ENCODE measurements at regions of chr14 and their contacts with region 1.

Region 1: GRCh38 chr14:104184911-104185499 is 46.6 kb downstream of the KIF26A start:
- DNase-seq: peak; percentile 86
- H3K4me3 ChIP-seq: no peak overlapping the region
- H3K27ac ChIP-seq: peak overlapping the region; percentile 85
- H3K4me1 ChIP-seq: peaks cover 11% of the 10 kb centered on the region
- H3K27me3 ChIP-seq: no peaks in the 10 kb centered on the region
- CTCF ChIP-seq: no peak
- POLR2A ChIP-seq: no peak

Region 2: DNA sequence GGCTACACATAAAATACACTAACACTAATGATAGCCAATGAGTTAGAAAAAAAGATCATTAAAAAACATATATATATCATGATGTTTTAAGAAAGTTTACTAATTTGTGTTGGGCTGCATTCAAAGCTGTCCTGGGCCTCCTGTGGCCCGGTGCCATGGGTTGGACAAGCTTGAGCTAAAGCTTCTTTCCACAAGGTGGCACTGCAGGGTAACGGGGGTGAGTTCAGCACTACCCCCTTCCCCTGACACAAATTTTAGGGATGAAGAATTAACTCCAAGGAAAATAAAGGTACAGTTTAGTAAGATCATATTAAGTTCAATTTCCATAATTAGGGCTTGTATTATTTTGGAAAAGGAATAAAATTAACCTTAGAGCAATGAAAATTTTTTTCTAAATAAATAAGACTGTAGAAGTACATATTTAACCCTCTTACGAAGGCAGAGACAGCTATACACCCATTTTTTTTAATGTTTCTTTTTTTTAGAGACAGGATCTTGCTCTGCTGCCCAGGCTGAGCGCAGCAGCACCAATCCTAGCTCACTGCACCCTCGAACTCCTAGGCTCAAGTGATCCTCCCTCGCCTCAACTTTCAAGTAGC is 376.5 kb before region 1 on chr14:
- CTCF ChIA-PET with region 1: no interaction called
- POLR2A ChIA-PET with region 1: no interaction called
- dilution Hi-C with region 1: no loop called
- intact Hi-C with region 1: no loop called
- DNase-seq: peak; percentile 69
- H3K4me3 ChIP-seq: no peak overlapping the region
- H3K27ac ChIP-seq: no peak overlapping the region
- H3K4me1 ChIP-seq: peaks cover 5% of the 10 kb centered on the region
- H3K27me3 ChIP-seq: no peaks in the 10 kb centered on the region
- CTCF ChIP-seq: peak; percentile 69 to 84
- POLR2A ChIP-seq: no peak

Region 3: GRCh38 chr14:104150136-104151027 is 34.6 kb before region 1 on chr14:
- CTCF ChIA-PET with region 1: no interaction called
- POLR2A ChIA-PET with region 1: no interaction called
- dilution Hi-C with region 1: no loop called
- intact Hi-C with region 1: loop called (anchors 2 kb)
- DNase-seq: no peak
- H3K4me3 ChIP-seq: no peak overlapping the region
- H3K27ac ChIP-seq: no peak overlapping the region
- H3K4me1 ChIP-seq: peaks cover 32% of the 10 kb centered on the region
- H3K27me3 ChIP-seq: no peaks in the 10 kb centered on the region
- CTCF ChIP-seq: peak; percentile 27 to 32
- POLR2A ChIP-seq: no peak

Region 4: GRCh38 chr14:104224506-104225277 is 39.7 kb after region 1 on chr14:
- CTCF ChIA-PET with region 1: interaction called, 4 read pairs
- POLR2A ChIA-PET with region 1: no interaction called
- dilution Hi-C with region 1: no loop called
- intact Hi-C with region 1: loop called (anchors 5 kb)
- DNase-seq: peak; percentile 14
- H3K4me3 ChIP-seq: no peak overlapping the region
- H3K27ac ChIP-seq: no peak overlapping the region
- H3K4me1 ChIP-seq: no peaks in the 10 kb centered on the region
- H3K27me3 ChIP-seq: no peaks in the 10 kb centered on the region
- CTCF ChIP-seq: peak; percentile 60 to 75
- POLR2A ChIP-seq: no peak

Region 5: GRCh38 chr14:104293851-104294627 is 109.0 kb after region 1 on chr14:
- CTCF ChIA-PET with region 1: no interaction called
- POLR2A ChIA-PET with region 1: no interaction called
- dilution Hi-C with region 1: no loop called
- intact Hi-C with region 1: no loop called
- DNase-seq: no peak
- H3K4me3 ChIP-seq: no peak overlapping the region
- H3K27ac ChIP-seq: no peak overlapping the region
- H3K4me1 ChIP-seq: peaks cover 2% of the 10 kb centered on the region
- H3K27me3 ChIP-seq: no peaks in the 10 kb centered on the region
- CTCF ChIP-seq: peak in 1 of 2 donors; percentile 33
- POLR2A ChIP-seq: no peak

Region 6: DNA sequence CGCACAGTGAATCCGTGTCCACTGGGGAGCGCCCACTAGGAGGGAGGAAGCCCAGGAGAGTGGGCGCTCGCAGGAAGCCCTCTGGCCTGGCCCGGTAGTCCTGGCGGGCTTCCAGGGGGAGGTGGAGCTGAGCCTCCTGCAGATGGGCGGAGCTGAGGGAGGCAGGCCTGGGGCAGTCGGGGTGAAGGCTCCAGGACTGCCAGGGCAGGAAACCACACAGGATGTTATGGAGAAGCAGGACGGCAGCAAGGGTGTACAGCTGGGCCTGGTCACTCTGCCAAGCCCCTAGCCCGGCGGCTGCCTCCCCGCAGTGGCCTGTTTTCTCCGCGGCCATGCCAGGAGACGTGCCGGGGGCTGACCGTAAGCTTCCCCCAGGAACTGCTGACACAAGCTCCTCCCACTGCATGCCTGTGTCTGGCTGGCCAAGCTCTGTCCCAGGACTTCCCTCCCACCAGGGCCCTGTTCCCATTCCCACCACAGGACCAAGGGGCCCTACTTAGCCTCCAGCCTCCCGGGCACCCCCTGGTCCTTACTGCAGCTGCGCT is 251.1 kb after region 1 on chr14:
- CTCF ChIA-PET with region 1: no interaction called
- POLR2A ChIA-PET with region 1: no interaction called
- dilution Hi-C with region 1: no loop called
- intact Hi-C with region 1: loop called (anchors 10 kb)
- DNase-seq: peak; percentile 96
- H3K4me3 ChIP-seq: no peak overlapping the region
- H3K27ac ChIP-seq: peak overlapping the region; percentile 89
- H3K4me1 ChIP-seq: peaks cover 16% of the 10 kb centered on the region
- H3K27me3 ChIP-seq: no peaks in the 10 kb centered on the region
- CTCF ChIP-seq: no peak
- POLR2A ChIP-seq: peak; percentile 20